PC-3 (cell line): ENCODE measurements at regions of chr6 and their contacts with region 1.

Region 1: DNA sequence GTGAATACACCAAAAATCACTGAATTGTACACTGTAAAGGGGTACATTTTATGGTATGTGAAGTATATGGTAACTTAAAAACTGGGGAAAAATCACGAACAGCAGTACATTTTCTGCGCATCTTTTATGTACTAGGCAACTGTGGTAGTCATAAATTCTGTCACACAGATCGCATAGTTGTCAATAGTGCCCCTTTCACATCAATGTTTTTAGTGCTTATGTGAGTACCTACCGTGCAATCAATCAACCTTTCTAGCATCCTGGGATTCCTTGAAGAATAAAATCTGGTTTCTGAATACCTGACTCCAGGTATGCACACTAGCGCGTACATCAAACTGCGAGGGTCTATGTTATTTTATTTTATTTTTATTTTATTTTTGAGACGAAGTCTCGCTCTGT is 637 bp upstream of the RPF2 start:
- DNase-seq: no peak
- ATAC-seq: no peak
- H3K4me3 ChIP-seq: peak overlapping the region; percentile 84
- H3K27ac ChIP-seq: no peak overlapping the region
- H3K4me1 ChIP-seq: peaks cover 9% of the 10 kb centered on the region
- H3K27me3 ChIP-seq: no peaks in the 10 kb centered on the region
- CTCF ChIP-seq: no peak

Region 2: DNA sequence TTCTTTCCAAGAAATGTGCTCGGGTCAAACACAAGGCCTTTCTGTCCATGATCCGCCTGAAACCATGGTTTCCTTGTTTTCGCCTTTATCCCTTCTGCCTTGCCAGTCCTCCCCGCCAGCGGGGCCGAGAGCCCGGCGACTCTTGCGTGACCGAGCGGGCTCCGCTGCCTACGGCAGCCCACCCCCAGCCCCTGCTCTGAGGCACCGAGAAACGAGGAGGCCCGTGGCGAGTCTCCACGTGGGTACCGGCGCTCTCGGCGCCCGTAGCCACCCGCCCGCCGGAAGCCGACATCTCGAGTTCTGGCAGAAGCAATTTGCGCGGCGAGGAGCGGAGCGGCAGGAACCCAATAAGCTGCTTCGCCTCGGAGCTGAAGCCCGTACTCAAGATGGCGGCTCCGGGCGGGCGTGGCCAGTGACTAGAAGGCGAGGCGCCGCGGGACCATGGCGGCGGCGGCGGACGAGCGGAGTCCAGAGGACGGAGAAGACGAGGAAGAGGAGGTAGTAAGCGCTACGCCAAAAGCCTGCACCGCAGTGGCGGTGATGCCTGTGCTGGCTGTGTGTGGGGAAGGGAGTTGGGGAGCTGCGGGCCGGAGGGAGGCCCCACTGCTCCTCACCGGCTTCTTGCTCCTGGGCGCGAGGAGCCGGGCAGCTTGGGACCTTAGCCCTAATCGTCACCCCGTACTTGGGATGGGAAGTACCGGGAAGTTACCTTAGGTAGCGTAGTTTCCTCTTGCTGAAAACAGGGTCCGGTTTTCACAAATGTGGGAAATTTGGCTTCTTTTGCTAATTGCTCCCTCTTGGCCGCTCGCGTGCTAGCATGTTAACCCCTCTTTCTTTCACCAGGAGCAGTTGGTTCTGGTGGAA is 22.6 kb before region 1 on chr6 and contains the start of gene GTF3C6:
- CTCF ChIA-PET with region 1: no interaction called
- POLR2A ChIA-PET with region 1: interaction called, 6 read pairs
- intact Hi-C with region 1: loop called (anchors 2 kb)
- DNase-seq: peak; percentile 76
- ATAC-seq: peak; percentile 89
- H3K4me3 ChIP-seq: peak within 1 kb of the TSS; percentile 91
- H3K27ac ChIP-seq: peak within 1 kb of the TSS; percentile 68
- H3K4me1 ChIP-seq: peaks cover 8% of the 10 kb centered on the region; the same call in 1 of the 2 replicates
- H3K27me3 ChIP-seq: no peaks in the 10 kb centered on the region
- CTCF ChIP-seq: no peak
- total RNA-seq, gene GTF3C6: 59.2 and 72.7 TPM in 2 replicates

Region 3: GRCh38 chr6:112163295-112164257 is 1182.4 kb after region 1 on chr6:
- CTCF ChIA-PET with region 1: no interaction called
- POLR2A ChIA-PET with region 1: interaction called, 10 read pairs
- intact Hi-C with region 1: no loop called
- DNase-seq: peak; percentile 64
- ATAC-seq: peak; percentile 99
- H3K4me3 ChIP-seq: no peak overlapping the region
- H3K27ac ChIP-seq: no peak overlapping the region
- H3K4me1 ChIP-seq: no peaks in the 10 kb centered on the region
- H3K27me3 ChIP-seq: no peaks in the 10 kb centered on the region
- CTCF ChIP-seq: peak; percentile 86